ENCODE measurements at regions of chr11 and their contacts with region 1.

Region 1: DNA sequence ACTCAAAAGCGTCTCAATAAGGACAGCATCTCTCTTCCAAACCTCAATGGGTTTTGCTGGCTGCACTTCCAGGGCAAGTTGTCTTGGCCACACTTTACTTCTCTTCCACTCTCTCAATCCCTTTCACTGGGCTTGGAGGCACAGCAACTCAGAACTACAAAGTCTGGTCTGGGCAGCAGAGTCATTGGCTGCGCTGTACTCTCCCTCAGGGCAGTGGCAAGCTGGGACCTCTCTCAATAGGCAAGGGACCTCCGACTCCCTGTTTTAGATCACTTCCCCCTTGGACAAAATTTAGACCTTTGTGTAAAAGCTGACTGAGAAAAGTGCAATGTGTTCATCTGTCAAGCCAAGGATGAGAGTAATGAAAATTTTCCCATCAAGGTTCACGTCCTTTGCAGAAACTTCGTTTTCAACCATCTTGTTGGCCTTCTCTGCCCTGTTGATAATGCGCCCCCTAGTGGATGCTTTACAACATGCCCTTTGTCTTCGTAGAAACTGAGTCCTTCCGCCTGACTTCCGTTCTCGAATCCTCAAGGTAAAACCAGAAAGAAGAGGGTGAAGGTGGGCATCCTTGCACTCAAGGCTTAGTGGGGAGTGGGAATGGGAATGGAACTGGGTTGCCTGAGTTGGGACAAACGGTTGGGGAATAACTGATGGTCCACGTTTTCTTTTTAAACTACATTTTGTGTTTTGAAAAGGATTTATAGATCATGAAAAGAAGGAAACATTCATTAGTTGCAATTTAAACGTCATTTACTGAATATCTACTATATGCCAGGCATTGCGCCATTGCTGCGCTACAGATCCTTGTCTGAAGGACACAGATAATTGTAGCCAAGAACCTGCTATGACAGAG is 99.1 kb downstream of the CD44 start:
- DNase-seq: no peak
- ATAC-seq: peak; percentile 56

Region 2: GRCh38 chr11:34926101-34926830 is 311.8 kb before region 1 on chr11:
- intact Hi-C with region 1: loop called (anchors 5 kb)
- DNase-seq: no peak
- ATAC-seq: peak; percentile 72

Region 3: DNA sequence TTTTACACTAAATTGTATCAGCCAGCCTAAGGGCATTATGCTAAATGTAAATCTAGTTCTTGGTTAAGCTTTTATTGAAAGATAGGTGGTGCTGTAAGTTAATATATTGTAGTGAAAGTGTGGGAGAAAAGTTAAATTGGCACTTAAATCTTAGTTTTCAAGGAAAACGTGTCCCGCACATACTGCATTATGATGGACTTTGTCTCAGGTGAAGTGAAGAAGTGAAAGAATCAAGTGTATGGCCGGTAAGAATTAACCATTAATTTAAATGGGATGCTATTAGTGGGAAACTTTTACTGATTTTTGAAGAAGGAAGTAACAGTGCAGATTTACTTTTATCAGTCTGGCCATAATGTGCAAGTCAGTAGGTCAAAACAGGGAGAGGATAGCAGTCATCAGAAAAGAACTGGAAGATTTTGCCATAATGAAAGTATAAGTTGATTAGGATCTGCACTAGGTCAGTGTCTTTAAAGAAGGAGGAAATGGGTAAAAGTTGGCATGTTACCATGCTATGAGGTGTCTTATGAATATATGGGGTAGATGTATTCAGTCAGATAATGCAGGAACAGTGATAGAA is 240.0 kb before region 1 on chr11:
- intact Hi-C with region 1: loop called (anchors 10 kb)
- DNase-seq: no peak
- ATAC-seq: no peak

Region 4: DNA sequence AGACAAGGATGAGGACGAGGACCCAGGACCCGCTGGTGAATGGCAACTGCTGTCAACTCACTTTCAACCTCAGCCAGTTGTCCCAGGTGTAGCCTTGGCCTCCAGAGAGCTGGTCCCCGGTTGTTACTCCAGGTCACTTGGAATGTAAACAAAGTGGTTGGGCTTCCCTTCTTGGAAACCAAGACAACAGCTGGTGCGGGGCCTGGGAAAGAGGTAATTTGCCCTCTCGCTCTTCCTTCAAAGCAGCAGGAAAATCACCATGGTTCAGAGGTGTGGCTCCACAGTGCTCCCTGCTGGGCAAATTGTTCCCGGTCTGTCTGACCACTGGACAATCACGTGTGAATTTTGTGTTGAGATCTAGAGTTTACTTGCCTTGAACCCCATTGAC is 166.3 kb after region 1 on chr11:
- intact Hi-C with region 1: no loop called
- DNase-seq: no peak
- ATAC-seq: no peak

Measured in left ventricle myocardium superior (tissue), 1 donor.